ENCODE measurements at regions of chr2 and their contacts with region 1.

Region 1: DNA sequence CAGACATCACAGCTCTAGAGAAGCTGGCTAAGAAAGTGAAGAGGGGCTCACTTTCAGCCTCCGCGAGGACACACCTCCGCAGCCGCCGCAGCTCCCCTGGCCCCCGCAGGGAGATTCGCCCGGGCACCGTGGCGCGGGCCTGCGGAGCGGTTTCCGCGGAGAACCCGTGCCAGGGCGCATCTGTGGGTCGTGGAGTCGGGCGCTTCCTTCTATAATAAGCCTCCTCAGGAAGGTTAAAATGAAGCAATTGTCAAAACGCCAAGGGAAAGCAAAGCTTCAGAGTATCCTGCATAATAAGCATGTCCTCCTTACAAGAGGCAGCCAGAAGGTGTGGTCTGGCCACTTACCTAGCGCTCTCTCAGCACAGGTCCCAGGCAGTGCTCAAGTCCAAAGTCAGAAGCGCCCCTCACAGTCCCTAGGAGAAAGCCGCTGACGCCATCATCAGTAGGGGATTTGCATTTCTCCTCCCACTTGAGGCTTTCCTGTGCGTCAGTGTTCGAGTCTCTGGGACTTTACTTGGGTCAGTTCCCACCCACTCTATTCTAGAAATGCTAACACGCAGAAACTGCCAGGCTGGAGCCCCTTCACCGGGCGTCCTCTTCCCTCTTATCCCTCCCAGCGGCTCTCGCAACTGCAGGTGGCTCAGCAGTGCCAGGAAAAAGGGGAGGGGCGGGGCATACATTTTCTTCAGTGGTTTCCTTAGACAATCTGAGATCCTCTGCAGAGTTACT is at the start of gene STAT4:
- DNase-seq: peak; percentile 55 to 92 (median 84)
- ATAC-seq: peak; percentile 91
- H3K4me3 ChIP-seq: peak within 1 kb of the TSS; percentile 96
- H3K4me3 Mint-ChIP-seq: peak within 1 kb of the TSS; percentile 87 to 99 (median 95)
- H3K27ac ChIP-seq: peak within 1 kb of the TSS; percentile 98
- H3K27ac Mint-ChIP-seq: peak within 1 kb of the TSS; percentile 89 to 99 (median 95)
- H3K4me1 ChIP-seq: peaks cover 33 to 57% of the 10 kb centered on the region in 2 donors
- H3K4me1 Mint-ChIP-seq: peaks cover 33 to 70% (median 55%) of the 10 kb centered on the region in 7 donors
- H3K27me3 ChIP-seq: no peaks in the 10 kb centered on the region
- H3K27me3 Mint-ChIP-seq: no peaks in the 10 kb centered on the region
- total RNA-seq, gene STAT4: 106 to 132 (median 122) TPM

Region 2: DNA sequence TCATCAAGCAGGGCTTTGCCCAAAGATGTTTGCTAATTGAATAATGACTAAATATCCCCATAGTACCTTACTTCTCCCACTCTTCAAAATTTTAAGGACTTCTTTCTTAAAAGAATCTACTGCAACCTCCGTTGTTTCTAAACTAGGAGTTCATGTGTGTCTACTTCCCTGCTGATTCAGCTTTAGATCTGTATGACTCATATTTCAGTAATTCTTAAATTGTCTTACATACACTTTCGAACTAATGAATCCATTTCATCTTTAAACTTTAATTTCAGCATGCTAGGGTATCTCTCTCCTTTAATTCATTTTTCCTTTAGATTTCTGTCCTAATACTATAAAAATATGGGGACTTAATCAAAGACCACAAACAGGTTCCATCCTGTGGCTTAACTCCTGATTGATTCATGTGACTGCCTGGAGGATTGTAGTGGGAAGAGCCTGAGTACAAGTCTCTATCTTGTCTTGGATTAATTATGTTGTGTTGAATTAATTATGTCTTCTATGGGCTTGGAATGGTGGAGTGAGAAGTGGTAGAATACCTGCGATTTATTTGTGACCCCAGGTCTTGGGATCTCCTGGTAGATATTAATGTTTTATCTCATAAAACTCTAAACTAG is 1946.3 kb before region 1 on chr2:
- CTCF ChIA-PET with region 1: no interaction called
- POLR2A ChIA-PET with region 1: no interaction called
- intact Hi-C with region 1: no loop called
- DNase-seq: no peak
- ATAC-seq: no peak
- H3K4me3 ChIP-seq: no peak overlapping the region
- H3K4me3 Mint-ChIP-seq: no peak overlapping the region
- H3K27ac ChIP-seq: no peak overlapping the region
- H3K27ac Mint-ChIP-seq: peak overlapping the region in 1 of 9 donors; percentile 10
- H3K4me1 ChIP-seq: no peaks in the 10 kb centered on the region
- H3K4me1 Mint-ChIP-seq: peaks cover 0 to 5% (median 0%) of the 10 kb centered on the region in 7 donors
- H3K27me3 ChIP-seq: no peaks in the 10 kb centered on the region
- H3K27me3 Mint-ChIP-seq: peaks cover 0 to 4% (median 0%) of the 10 kb centered on the region in 5 donors

Region 3: GRCh38 chr2:189798312-189799029 is 1352.3 kb before region 1 on chr2:
- CTCF ChIA-PET with region 1: no interaction called
- POLR2A ChIA-PET with region 1: no interaction called
- intact Hi-C with region 1: no loop called
- DNase-seq: no peak
- ATAC-seq: peak; percentile 62
- H3K4me3 ChIP-seq: no peak overlapping the region
- H3K4me3 Mint-ChIP-seq: no peak overlapping the region
- H3K27ac ChIP-seq: no peak overlapping the region
- H3K27ac Mint-ChIP-seq: no peak overlapping the region
- H3K4me1 ChIP-seq: no peaks in the 10 kb centered on the region
- H3K4me1 Mint-ChIP-seq: peaks cover 0 to 8% (median 0%) of the 10 kb centered on the region in 7 donors
- H3K27me3 ChIP-seq: no peaks in the 10 kb centered on the region
- H3K27me3 Mint-ChIP-seq: no peaks in the 10 kb centered on the region

Region 4: DNA sequence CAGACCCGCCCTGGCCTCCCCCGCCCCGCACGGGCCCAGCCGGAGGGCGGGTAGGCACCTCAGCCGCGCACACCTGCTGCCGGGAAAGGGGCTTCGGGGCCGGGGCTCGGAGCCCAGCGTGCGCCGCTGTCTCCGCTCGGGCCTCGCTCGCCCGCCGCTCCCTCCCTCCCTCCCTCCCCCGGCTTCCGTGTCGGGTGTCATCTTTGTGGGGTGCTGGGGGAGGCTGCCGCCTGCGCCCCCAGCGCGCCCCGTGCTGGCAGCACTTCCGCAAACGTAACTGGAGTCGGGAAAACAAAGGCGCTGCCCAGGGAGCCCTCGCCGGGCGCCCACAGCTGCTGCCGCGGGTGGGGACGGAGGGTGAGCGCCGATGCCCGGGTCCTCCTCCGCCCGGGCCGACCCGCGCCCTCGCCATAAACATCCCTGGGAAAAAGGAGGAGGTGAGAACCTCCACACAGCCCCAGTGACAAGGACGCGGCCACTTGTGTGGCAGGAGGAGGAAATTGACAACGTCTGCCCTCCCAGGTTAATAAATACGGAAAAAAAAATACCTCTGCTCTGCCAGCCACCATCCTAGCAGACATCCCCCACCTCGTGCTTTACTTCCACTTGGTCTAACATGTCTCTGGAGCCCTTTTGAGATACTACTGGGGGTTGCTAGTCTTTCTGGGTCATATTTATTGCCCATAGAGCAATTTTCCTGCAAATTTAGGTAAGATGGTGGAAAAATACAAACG is 742.1 kb before region 1 on chr2:
- CTCF ChIA-PET with region 1: no interaction called
- POLR2A ChIA-PET with region 1: interaction called, 4 read pairs
- intact Hi-C with region 1: loop called in 1 of 2 experiments (anchors 2 kb)
- DNase-seq: peak in 8 of 9 donors; percentile 69 to 86 (median 82)
- ATAC-seq: peak; percentile 68
- H3K4me3 ChIP-seq: peak overlapping the region; percentile 76
- H3K4me3 Mint-ChIP-seq: peak overlapping the region; percentile 87 to 95 (median 92)
- H3K27ac ChIP-seq: peak overlapping the region; percentile 100
- H3K27ac Mint-ChIP-seq: peak overlapping the region; percentile 94 to 98 (median 98)
- H3K4me1 ChIP-seq: peaks cover 28 to 41% of the 10 kb centered on the region in 2 donors
- H3K4me1 Mint-ChIP-seq: peaks cover 29 to 52% (median 45%) of the 10 kb centered on the region in 7 donors
- H3K27me3 ChIP-seq: no peaks in the 10 kb centered on the region
- H3K27me3 Mint-ChIP-seq: no peaks in the 10 kb centered on the region

Region 5: DNA sequence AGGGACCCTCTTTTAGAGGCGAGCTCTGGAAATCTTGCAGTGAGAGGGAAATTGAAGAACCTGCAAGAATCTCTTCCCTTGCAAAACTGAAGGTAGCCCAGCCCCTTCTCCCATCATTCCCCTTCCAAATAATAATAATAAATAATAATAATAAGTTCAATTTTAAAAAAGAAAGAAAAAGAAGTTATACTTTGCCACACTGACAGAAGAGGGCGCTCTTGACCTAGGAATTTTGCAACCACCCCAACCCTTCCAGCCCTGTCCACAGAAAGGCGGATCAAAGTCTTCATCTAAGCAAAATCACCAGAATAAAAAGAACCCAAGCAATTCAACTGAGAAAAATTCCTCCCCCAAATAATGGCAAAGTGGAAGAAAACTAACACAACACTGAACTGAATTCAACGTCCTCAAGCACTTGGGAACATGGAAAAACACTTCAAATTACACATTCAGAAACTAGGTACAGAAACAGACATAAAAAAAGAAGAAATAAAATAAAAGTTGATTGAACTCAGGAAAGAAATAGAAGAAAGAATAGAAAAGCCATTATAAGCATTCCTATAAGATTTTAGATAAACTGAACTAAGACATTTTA is 369.1 kb before region 1 on chr2:
- CTCF ChIA-PET with region 1: no interaction called
- POLR2A ChIA-PET with region 1: no interaction called
- intact Hi-C with region 1: loop called in 1 of 2 experiments (anchors 5 kb)
- DNase-seq: peak in 8 of 9 donors; percentile 27 to 60 (median 46)
- ATAC-seq: peak; percentile 77
- H3K4me3 ChIP-seq: no peak overlapping the region
- H3K4me3 Mint-ChIP-seq: no peak overlapping the region
- H3K27ac ChIP-seq: no peak overlapping the region
- H3K27ac Mint-ChIP-seq: no peak overlapping the region
- H3K4me1 ChIP-seq: no peaks in the 10 kb centered on the region
- H3K4me1 Mint-ChIP-seq: peaks cover 0 to 11% (median 1%) of the 10 kb centered on the region in 7 donors
- H3K27me3 ChIP-seq: no peaks in the 10 kb centered on the region
- H3K27me3 Mint-ChIP-seq: peaks cover 0 to 8% (median 0%) of the 10 kb centered on the region in 5 donors

Region 6: DNA sequence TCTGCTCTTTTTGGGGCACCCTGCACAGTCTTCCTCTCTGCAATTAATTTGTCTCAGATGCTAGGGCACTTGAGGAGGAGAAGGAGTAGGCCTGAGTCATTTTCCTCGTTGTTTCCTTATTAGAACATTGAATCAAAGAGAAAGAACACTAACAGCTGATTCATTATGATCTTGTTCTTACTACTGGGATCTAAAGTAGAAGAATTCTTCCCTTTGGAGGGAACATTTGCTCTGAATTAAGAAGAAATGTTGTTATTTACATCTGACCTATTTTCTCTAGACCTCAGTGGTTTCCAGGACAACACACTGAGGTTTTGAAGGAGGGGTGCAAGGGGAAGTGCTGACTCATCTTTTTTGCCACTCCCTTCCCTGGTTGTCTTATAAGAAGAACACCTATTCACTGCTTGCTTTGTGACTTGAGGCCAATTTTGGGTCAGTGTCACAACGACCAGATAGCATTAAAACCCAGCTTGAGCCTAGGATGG is 112.5 kb before region 1 on chr2:
- CTCF ChIA-PET with region 1: interaction called, 19 read pairs
- POLR2A ChIA-PET with region 1: interaction called, 4 read pairs
- intact Hi-C with region 1: no loop called
- DNase-seq: no peak
- ATAC-seq: peak; percentile 71
- H3K4me3 ChIP-seq: no peak overlapping the region
- H3K4me3 Mint-ChIP-seq: peak overlapping the region in 2 of 10 donors; percentile 26 to 74
- H3K27ac ChIP-seq: peak overlapping the region; percentile 9
- H3K27ac Mint-ChIP-seq: peak overlapping the region; percentile 10 to 91 (median 44)
- H3K4me1 ChIP-seq: peaks cover 0 to 26% of the 10 kb centered on the region in 2 donors
- H3K4me1 Mint-ChIP-seq: peaks cover 7 to 43% (median 12%) of the 10 kb centered on the region in 7 donors
- H3K27me3 ChIP-seq: no peaks in the 10 kb centered on the region
- H3K27me3 Mint-ChIP-seq: no peaks in the 10 kb centered on the region

Region 7: GRCh38 chr2:191066197-191066918 is 84.4 kb before region 1 on chr2:
- CTCF ChIA-PET with region 1: interaction called, 9 read pairs
- POLR2A ChIA-PET with region 1: interaction called, 79 read pairs
- intact Hi-C with region 1: loop called (anchors 1 kb)
- DNase-seq: peak in 2 of 9 donors; percentile 20 to 26
- ATAC-seq: peak; percentile 46
- H3K4me3 ChIP-seq: no peak overlapping the region
- H3K4me3 Mint-ChIP-seq: peak overlapping the region; percentile 42 to 87 (median 67)
- H3K27ac ChIP-seq: peak overlapping the region; percentile 60
- H3K27ac Mint-ChIP-seq: peak overlapping the region; percentile 51 to 95 (median 89)
- H3K4me1 ChIP-seq: peaks cover 53 to 67% of the 10 kb centered on the region in 2 donors
- H3K4me1 Mint-ChIP-seq: peaks cover 51 to 93% (median 88%) of the 10 kb centered on the region in 7 donors
- H3K27me3 ChIP-seq: no peaks in the 10 kb centered on the region
- H3K27me3 Mint-ChIP-seq: no peaks in the 10 kb centered on the region

Region 8: GRCh38 chr2:191165176-191165643 is 14.4 kb after region 1 on chr2:
- CTCF ChIA-PET with region 1: interaction called, 15 read pairs
- POLR2A ChIA-PET with region 1: interaction called, 4 read pairs
- intact Hi-C with region 1: no loop called
- DNase-seq: peak in 6 of 9 donors; percentile 22 to 65 (median 52)
- ATAC-seq: peak; percentile 79
- H3K4me3 ChIP-seq: no peak overlapping the region
- H3K4me3 Mint-ChIP-seq: peak overlapping the region in 1 of 10 donors; percentile 50
- H3K27ac ChIP-seq: no peak overlapping the region
- H3K27ac Mint-ChIP-seq: peak overlapping the region in 2 of 9 donors; percentile 51 to 56
- H3K4me1 ChIP-seq: no peaks in the 10 kb centered on the region
- H3K4me1 Mint-ChIP-seq: peaks cover 2 to 18% (median 10%) of the 10 kb centered on the region in 7 donors
- H3K27me3 ChIP-seq: no peaks in the 10 kb centered on the region
- H3K27me3 Mint-ChIP-seq: peaks cover 0 to 8% (median 2%) of the 10 kb centered on the region in 5 donors

Region 9: GRCh38 chr2:191478799-191479679 is 328.3 kb after region 1 on chr2:
- CTCF ChIA-PET with region 1: no interaction called
- POLR2A ChIA-PET with region 1: no interaction called
- intact Hi-C with region 1: no loop called
- DNase-seq: no peak
- ATAC-seq: no peak
- H3K4me3 ChIP-seq: no peak overlapping the region
- H3K4me3 Mint-ChIP-seq: no peak overlapping the region
- H3K27ac ChIP-seq: no peak overlapping the region
- H3K27ac Mint-ChIP-seq: no peak overlapping the region
- H3K4me1 ChIP-seq: no peaks in the 10 kb centered on the region
- H3K4me1 Mint-ChIP-seq: no peaks in the 10 kb centered on the region
- H3K27me3 ChIP-seq: peaks cover 0 to 3% of the 10 kb centered on the region in 2 donors
- H3K27me3 Mint-ChIP-seq: peaks cover 5 to 32% (median 22%) of the 10 kb centered on the region in 5 donors

Region 10: GRCh38 chr2:191677646-191678436 is 527.1 kb after region 1 on chr2 and contains the start of gene NABP1:
- CTCF ChIA-PET with region 1: no interaction called
- POLR2A ChIA-PET with region 1: interaction called, 16 read pairs
- intact Hi-C with region 1: loop called (anchors 1 kb)
- DNase-seq: peak; percentile 98 to 99 (median 98)
- ATAC-seq: peak; percentile 95
- H3K4me3 ChIP-seq: peak within 1 kb of the TSS; percentile 90
- H3K4me3 Mint-ChIP-seq: peak within 1 kb of the TSS; percentile 87 to 99 (median 96)
- H3K27ac ChIP-seq: peak within 1 kb of the TSS; percentile 92
- H3K27ac Mint-ChIP-seq: peak within 1 kb of the TSS; percentile 97 to 100 (median 99)
- H3K4me1 ChIP-seq: peaks cover 49 to 51% of the 10 kb centered on the region in 2 donors
- H3K4me1 Mint-ChIP-seq: peaks cover 30 to 74% (median 63%) of the 10 kb centered on the region in 7 donors
- H3K27me3 ChIP-seq: no peaks in the 10 kb centered on the region
- H3K27me3 Mint-ChIP-seq: peaks cover 0 to 2% (median 0%) of the 10 kb centered on the region in 5 donors
- total RNA-seq, gene NABP1: 24.5 to 79.5 (median 55.4) TPM

Measured in naive thymus-derived CD4-positive, alpha-beta T cell (primary cell).